PC-9 (cell line): ENCODE measurements at regions of chr6 and their contacts with region 1.

Region 1: GRCh38 chr6:5143634-5144311 is 58.6 kb downstream of the PPP1R3G start:
- DNase-seq: peak; percentile 46 to 77
- H3K4me3 ChIP-seq: no peak overlapping the region
- H3K27ac ChIP-seq: no peak overlapping the region
- H3K4me1 ChIP-seq: no peaks in the 10 kb centered on the region
- H3K27me3 ChIP-seq: no peaks in the 10 kb centered on the region
- CTCF ChIP-seq: peak; percentile 85

Region 2: GRCh38 chr6:5058254-5058653 is 85.5 kb before region 1 on chr6:
- CTCF ChIA-PET with region 1: no interaction called
- POLR2A ChIA-PET with region 1: no interaction called
- intact Hi-C with region 1: loop called (anchors 5 kb)
- DNase-seq: no peak
- H3K4me3 ChIP-seq: no peak overlapping the region
- H3K27ac ChIP-seq: no peak overlapping the region
- H3K4me1 ChIP-seq: no peaks in the 10 kb centered on the region
- H3K27me3 ChIP-seq: no peaks in the 10 kb centered on the region
- CTCF ChIP-seq: no peak

Region 3: GRCh38 chr6:5302995-5303622 is 159.3 kb after region 1 on chr6:
- CTCF ChIA-PET with region 1: no interaction called
- POLR2A ChIA-PET with region 1: no interaction called
- intact Hi-C with region 1: loop called (anchors 1 kb)
- DNase-seq: peak in 1 of 2 experiments; percentile 23
- H3K4me3 ChIP-seq: no peak overlapping the region
- H3K27ac ChIP-seq: no peak overlapping the region
- H3K4me1 ChIP-seq: no peaks in the 10 kb centered on the region
- H3K27me3 ChIP-seq: no peaks in the 10 kb centered on the region
- CTCF ChIP-seq: no peak

Region 4: GRCh38 chr6:5401845-5402738 is 258.3 kb after region 1 on chr6:
- CTCF ChIA-PET with region 1: interaction called, 3 read pairs
- POLR2A ChIA-PET with region 1: no interaction called
- intact Hi-C with region 1: loop called (anchors 1 kb)
- DNase-seq: no peak
- H3K4me3 ChIP-seq: no peak overlapping the region
- H3K27ac ChIP-seq: no peak overlapping the region
- H3K4me1 ChIP-seq: no peaks in the 10 kb centered on the region
- H3K27me3 ChIP-seq: no peaks in the 10 kb centered on the region
- CTCF ChIP-seq: peak; percentile 66

Region 5: GRCh38 chr6:5511954-5512353 is 368.2 kb after region 1 on chr6:
- CTCF ChIA-PET with region 1: no interaction called
- POLR2A ChIA-PET with region 1: no interaction called
- intact Hi-C with region 1: no loop called
- DNase-seq: no peak
- H3K4me3 ChIP-seq: no peak overlapping the region
- H3K27ac ChIP-seq: no peak overlapping the region
- H3K4me1 ChIP-seq: no peaks in the 10 kb centered on the region
- H3K27me3 ChIP-seq: no peaks in the 10 kb centered on the region
- CTCF ChIP-seq: no peak